ENCODE measurements at regions of chr17 and their contacts with region 1.

Region 1: GRCh38 chr17:1724506-1725362 is at the start of gene WDR81:
- DNase-seq: peak; percentile 73 to 91 (median 82)
- ATAC-seq: peak; percentile 81 to 82
- H3K4me3 Mint-ChIP-seq: peak within 1 kb of the TSS; percentile 74 to 89 (median 80)
- H3K27ac Mint-ChIP-seq: peak within 1 kb of the TSS; percentile 57 to 94 (median 86)
- H3K4me1 Mint-ChIP-seq: peaks cover 20 to 59% (median 46%) of the 10 kb centered on the region in 4 donors
- H3K27me3 Mint-ChIP-seq: no peaks in the 10 kb centered on the region
- polyA plus RNA-seq, gene WDR81: 6.8 to 20.6 (median 9.2) TPM

Region 2: DNA sequence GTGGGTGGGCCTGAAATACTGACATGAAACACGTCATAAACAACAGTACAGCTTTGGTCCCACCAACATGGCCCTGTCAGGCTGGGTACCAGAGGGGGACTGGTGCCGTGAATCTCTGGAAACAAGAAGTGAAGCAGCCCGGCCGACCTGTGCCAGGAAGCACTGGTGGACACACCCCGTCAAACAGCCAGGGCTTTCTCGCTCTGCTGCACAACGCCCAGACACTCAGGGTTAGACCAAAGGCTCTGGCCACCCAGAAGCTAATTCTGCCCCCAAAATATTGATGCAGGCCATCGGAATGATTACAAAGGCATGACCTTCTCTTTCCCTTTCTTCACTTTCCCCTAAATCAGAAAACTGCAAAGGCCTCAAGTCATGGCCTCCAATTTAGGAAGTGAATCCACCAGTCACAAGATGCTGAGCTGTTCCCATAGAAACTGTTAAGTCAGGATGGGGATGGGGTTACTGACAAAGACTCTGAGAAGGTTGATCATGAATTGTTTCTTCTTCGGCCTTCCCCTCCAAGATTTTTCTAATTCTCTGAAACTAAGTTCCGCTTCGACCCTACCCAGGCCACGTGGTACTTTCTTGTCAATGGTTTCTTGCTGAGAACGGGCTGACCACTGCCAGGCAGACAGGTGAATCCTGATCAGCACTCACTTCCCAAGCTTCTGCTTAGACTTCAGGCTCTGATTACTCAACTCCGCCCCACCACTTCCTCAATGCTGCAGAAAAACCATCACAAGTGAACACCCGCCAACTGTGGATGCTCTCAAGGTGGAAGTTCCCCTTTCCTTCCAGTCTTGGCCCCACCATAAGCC is 168.9 kb before region 1 on chr17:
- POLR2A ChIA-PET with region 1: no interaction called
- DNase-seq: no peak
- ATAC-seq: no peak
- H3K4me3 Mint-ChIP-seq: peak overlapping the region in 1 of 10 donors; percentile 50
- H3K27ac Mint-ChIP-seq: peak overlapping the region in 1 of 10 donors; percentile 72
- H3K4me1 Mint-ChIP-seq: peaks cover 11 to 49% (median 23%) of the 10 kb centered on the region in 4 donors
- H3K27me3 Mint-ChIP-seq: no peaks in the 10 kb centered on the region

Region 3: GRCh38 chr17:1709971-1710806 is 14.5 kb before region 1 on chr17 and contains the start of gene TLCD2:
- POLR2A ChIA-PET with region 1: no interaction called
- DNase-seq: peak in 2 of 10 donors; percentile 13 to 25
- ATAC-seq: peak; percentile 56 to 57
- H3K4me3 Mint-ChIP-seq: peak within 1 kb of the TSS; percentile 56 to 83 (median 74)
- H3K27ac Mint-ChIP-seq: peak within 1 kb of the TSS in 6 of 10 donors; percentile 14 to 66 (median 32)
- H3K4me1 Mint-ChIP-seq: peaks cover 8 to 32% (median 24%) of the 10 kb centered on the region in 4 donors
- H3K27me3 Mint-ChIP-seq: peaks cover 5 to 48% (median 26%) of the 10 kb centered on the region in 5 donors
- polyA plus RNA-seq, gene TLCD2: not detected

Region 4: DNA sequence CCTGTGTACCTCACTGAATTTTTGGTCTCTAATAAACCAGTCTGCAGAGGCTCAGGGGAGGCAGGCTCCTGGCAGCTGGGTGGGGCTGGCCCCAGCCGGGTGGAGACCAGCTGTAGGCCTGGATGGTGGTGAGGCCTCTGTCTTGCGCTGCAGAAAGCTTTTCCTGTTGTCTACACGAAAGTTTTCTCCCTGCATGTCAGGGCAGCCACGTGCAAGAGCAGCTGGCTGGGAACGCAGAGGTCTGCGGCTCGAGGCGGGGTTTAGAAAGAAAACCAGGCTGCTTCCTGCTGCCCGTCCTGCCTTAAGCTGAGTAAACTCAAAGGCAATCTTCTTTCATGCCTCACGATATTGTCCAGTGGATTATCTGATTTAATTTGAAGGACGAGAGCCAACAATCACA is 39.5 kb after region 1 on chr17:
- POLR2A ChIA-PET with region 1: interaction called, 31 read pairs
- DNase-seq: peak in 9 of 10 donors; percentile 50 to 82 (median 60)
- ATAC-seq: peak; percentile 95
- H3K4me3 Mint-ChIP-seq: peak overlapping the region; percentile 52 to 81 (median 72)
- H3K27ac Mint-ChIP-seq: peak overlapping the region; percentile 84 to 96 (median 94)
- H3K4me1 Mint-ChIP-seq: peaks cover 21 to 49% (median 45%) of the 10 kb centered on the region in 4 donors
- H3K27me3 Mint-ChIP-seq: no peaks in the 10 kb centered on the region

Region 5: DNA sequence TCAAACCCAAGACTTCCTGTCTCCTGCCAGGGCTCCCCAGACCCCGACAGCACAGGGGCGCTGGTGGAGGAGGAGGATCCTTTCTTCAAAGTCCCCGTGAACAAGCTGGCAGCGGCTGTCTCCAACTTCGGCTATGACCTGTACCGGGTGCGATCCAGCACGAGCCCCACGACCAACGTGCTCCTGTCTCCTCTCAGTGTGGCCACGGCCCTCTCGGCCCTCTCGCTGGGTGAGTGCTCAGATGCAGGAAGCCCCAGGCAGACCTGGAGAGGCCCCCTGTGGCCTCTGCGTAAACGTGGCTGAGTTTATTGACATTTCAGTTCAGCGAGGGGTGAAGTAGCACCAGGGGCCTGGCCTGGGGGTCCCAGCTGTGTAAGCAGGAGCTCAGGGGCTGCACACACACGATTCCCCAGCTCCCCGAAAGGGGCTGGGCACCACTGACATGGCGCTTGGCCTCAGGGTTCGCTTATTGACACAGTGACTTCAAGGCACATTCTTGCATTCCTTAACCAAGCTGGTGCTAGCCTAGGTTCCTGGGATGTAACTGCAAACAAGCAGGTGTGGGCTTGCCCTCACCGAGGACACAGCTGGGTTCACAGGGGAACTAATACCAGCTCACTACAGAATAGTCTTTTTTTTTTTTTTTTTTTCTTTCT is 45.2 kb after region 1 on chr17:
- POLR2A ChIA-PET with region 1: interaction called, 31 read pairs
- DNase-seq: peak in 4 of 10 donors; percentile 8 to 44 (median 31)
- ATAC-seq: peak; percentile 67 to 73
- H3K4me3 Mint-ChIP-seq: peak overlapping the region; percentile 62 to 90 (median 83)
- H3K27ac Mint-ChIP-seq: peak overlapping the region; percentile 86 to 95 (median 91)
- H3K4me1 Mint-ChIP-seq: peaks cover 14 to 36% (median 32%) of the 10 kb centered on the region in 4 donors
- H3K27me3 Mint-ChIP-seq: no peaks in the 10 kb centered on the region

Region 6: GRCh38 chr17:1783834-1784611 is 59.3 kb after region 1 on chr17:
- POLR2A ChIA-PET with region 1: interaction called, 27 read pairs
- DNase-seq: peak in 2 of 10 donors; percentile 22 to 23
- ATAC-seq: peak; percentile 56 to 63
- H3K4me3 Mint-ChIP-seq: peak overlapping the region in 1 of 10 donors; percentile 36
- H3K27ac Mint-ChIP-seq: peak overlapping the region in 8 of 10 donors; percentile 6 to 87 (median 57)
- H3K4me1 Mint-ChIP-seq: peaks cover 0 to 21% (median 8%) of the 10 kb centered on the region in 4 donors
- H3K27me3 Mint-ChIP-seq: no peaks in the 10 kb centered on the region

Region 7: GRCh38 chr17:1803280-1803679 is 78.5 kb after region 1 on chr17:
- POLR2A ChIA-PET with region 1: no interaction called
- DNase-seq: no peak
- ATAC-seq: no peak
- H3K4me3 Mint-ChIP-seq: no peak overlapping the region
- H3K27ac Mint-ChIP-seq: peak overlapping the region in 1 of 10 donors; percentile 51
- H3K4me1 Mint-ChIP-seq: peaks cover 0 to 4% (median under 1%) of the 10 kb centered on the region in 4 donors
- H3K27me3 Mint-ChIP-seq: no peaks in the 10 kb centered on the region

Region 8: DNA sequence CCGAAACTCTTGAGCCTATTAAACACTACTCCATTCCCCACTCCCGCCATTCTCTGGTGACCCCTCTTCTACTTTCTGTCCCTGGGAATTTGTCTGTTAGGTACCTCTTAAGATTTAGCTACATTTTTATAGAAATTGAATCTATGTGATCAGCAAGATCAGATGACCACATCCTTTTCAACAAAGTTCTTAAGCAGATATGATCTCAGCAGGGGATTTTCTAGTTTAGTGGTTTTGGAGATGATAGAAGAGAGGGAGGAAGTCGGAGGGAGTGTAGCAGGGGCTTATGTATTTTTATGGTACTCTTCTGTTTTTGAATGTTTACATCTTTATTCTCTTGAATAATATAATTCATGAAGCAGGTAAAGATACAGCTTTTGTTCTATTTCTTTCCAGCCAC is 145.9 kb after region 1 on chr17:
- POLR2A ChIA-PET with region 1: interaction called, 11 read pairs
- DNase-seq: peak in 7 of 10 donors; percentile 22 to 85 (median 43)
- ATAC-seq: peak; percentile 70 to 76
- H3K4me3 Mint-ChIP-seq: peak overlapping the region; percentile 46 to 91 (median 72)
- H3K27ac Mint-ChIP-seq: peak overlapping the region; percentile 84 to 98 (median 94)
- H3K4me1 Mint-ChIP-seq: peaks cover 22 to 60% (median 46%) of the 10 kb centered on the region in 4 donors
- H3K27me3 Mint-ChIP-seq: no peaks in the 10 kb centered on the region